AG04450 (cell line): ENCODE measurements at regions of chr12 and their contacts with region 1.

Region 1: GRCh38 chr12:52506858-52507715 is 13.1 kb downstream of the KRT5 start:
- DNase-seq: peak; percentile 24
- H3K4me3 ChIP-seq: no peak overlapping the region
- H3K27ac ChIP-seq: no peak overlapping the region
- H3K27me3 ChIP-seq: peaks cover 7% of the 10 kb centered on the region
- CTCF ChIP-seq: peak; percentile 71

Region 2: DNA sequence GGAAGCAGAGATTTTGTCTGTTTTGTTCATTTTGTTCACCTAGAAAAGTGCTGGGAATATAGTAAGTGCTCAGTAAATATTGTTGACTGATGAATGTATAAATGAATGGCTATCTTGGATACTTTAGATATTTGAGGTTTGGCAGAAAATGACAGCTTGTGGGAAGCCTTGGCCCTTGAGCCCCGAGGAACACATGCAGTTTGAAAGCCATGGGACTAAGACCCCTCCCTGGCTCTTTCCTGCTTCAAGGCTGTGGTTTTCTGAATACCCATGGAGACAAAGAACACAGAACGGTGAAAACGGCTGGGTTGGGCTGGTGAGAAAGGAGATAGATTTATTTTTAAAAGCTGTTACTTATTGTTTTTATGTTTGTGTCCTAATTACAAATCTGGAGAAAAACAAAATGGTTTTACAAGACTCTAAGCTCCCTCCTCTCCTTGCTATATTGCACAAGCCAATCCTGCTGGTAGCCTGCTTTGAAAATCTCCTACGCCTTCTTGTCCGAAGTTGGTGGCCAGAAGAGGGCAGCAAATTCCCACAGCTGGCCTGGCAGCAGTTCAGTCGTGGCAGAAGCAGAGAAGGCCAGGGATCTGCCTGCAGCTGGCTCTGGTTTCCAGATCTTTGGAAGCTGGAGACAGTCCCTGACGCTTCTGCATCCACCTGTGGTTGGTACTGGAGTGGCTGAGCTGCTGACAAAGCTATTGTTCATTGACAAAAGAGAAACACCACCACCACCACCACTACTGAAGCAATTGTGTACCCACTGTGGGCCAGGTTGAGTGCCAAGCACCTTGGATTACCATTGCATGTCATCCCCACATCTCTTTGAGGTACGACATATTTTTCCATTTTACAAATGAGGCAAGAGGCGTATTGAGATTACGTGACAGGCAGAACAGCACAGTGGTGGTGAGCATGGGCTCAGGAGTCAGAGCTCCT is 134.6 kb before region 1 on chr12:
- CTCF ChIA-PET with region 1: interaction called, 38 read pairs
- POLR2A ChIA-PET with region 1: no interaction called
- DNase-seq: peak; percentile 72
- H3K4me3 ChIP-seq: no peak overlapping the region
- H3K27ac ChIP-seq: no peak overlapping the region
- H3K27me3 ChIP-seq: peaks cover 35% of the 10 kb centered on the region
- CTCF ChIP-seq: peak; percentile 89

Region 3: GRCh38 chr12:52473768-52474167 is 33.3 kb before region 1 on chr12 and contains the start of gene KRT6C:
- CTCF ChIA-PET with region 1: no interaction called
- POLR2A ChIA-PET with region 1: no interaction called
- DNase-seq: no peak
- H3K4me3 ChIP-seq: no peak within 1 kb of the TSS
- H3K27ac ChIP-seq: no peak within 1 kb of the TSS
- H3K27me3 ChIP-seq: peaks cover 9% of the 10 kb centered on the region
- CTCF ChIP-seq: no peak
- polyA plus RNA-seq, gene KRT6C: not detected in 2 replicates

Region 4: GRCh38 chr12:52522346-52523011 is 15.4 kb after region 1 on chr12:
- CTCF ChIA-PET with region 1: no interaction called
- POLR2A ChIA-PET with region 1: no interaction called
- DNase-seq: no peak
- H3K4me3 ChIP-seq: no peak overlapping the region
- H3K27ac ChIP-seq: no peak overlapping the region
- H3K27me3 ChIP-seq: peaks cover 8% of the 10 kb centered on the region
- CTCF ChIP-seq: no peak